HepG2 (cell line): ENCODE measurements at regions of chr4 and their contacts with region 1.

Region 1: DNA sequence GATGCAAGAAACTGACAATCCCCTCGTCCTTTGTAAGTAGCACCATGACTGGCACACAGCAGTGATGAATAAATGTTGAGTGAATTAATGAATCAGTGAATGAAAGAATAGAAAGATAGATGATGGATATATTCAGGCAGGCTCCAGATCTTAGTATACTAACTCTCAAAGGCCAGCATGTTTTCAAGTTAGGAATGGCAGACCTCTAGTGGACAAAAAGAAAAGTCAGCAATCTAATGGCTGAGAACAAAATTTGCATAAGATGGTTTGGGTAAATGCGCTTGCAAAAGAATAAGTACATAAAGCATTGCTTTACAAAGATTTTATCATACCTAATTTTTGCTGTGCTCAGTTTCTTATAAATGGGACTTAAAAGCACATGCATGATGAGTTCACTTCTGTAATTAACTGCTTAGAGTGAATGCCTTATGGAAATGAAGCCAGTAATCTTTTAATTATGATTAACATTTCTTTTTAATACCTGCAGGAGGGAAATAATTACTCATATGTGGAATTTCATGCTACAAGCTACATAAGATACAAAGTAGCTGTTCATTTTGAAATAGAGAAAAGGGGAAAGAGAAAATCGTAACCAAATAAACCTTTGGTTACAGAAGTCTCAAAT is 126.9 kb upstream of the GPRIN3 start:
- DNase-seq: no peak
- ATAC-seq: peak; percentile 63; the same call in 2 of the 3 replicates
- H3K4me3 ChIP-seq: no peak overlapping the region
- H3K27ac ChIP-seq: no peak overlapping the region
- H3K4me1 ChIP-seq: no peaks in the 10 kb centered on the region
- H3K27me3 ChIP-seq: no peaks in the 10 kb centered on the region
- CTCF ChIP-seq: peak; percentile 49
- EP300 ChIP-seq: no peak
- POLR2A ChIP-seq: no peak
- RAD21 ChIP-seq: no peak

Region 2: GRCh38 chr4:88866862-88867550 is 567.5 kb before region 1 on chr4:
- CTCF ChIA-PET with region 1: no interaction called
- POLR2A ChIA-PET with region 1: no interaction called
- in situ Hi-C with region 1: no loop called
- intact Hi-C with region 1: no loop called
- DNase-seq: no peak
- ATAC-seq: no peak
- H3K4me3 ChIP-seq: no peak overlapping the region
- H3K27ac ChIP-seq: no peak overlapping the region
- H3K4me1 ChIP-seq: peaks cover 11% of the 10 kb centered on the region
- H3K27me3 ChIP-seq: no peaks in the 10 kb centered on the region
- CTCF ChIP-seq: no peak
- EP300 ChIP-seq: no peak
- POLR2A ChIP-seq: no peak
- RAD21 ChIP-seq: no peak

Region 3: DNA sequence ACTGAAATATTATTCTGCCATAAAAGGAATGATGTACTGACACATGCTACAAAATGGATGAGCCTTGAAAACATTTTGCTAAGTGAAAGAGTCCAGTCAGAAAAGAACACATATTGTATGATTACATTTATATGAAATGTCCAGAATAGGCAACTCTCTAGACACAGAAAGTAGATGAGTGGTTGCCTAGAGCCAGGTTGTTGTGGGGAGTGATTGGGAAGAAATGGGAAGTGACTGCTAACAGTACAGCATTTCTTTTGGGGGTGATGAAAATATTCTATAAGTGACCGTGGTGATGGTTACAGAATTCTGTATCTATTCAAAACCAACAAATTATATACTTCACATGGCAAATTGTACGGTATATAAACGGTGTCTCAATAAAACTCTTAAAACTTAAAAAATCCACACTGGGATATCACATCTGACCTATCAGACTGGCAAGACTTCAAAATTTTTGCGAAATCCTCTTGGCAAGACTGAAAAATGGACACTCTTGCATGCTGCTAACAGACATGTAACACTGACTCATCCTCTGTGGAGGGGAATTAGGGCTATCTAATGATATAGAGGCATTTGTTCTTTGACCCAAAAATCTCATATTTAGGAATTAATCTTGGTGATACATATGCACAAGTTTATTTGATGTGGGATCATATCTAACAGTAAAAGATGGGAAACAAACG is 449.2 kb before region 1 on chr4:
- CTCF ChIA-PET with region 1: no interaction called
- POLR2A ChIA-PET with region 1: no interaction called
- in situ Hi-C with region 1: no loop called
- intact Hi-C with region 1: no loop called
- DNase-seq: no peak
- ATAC-seq: no peak
- H3K4me3 ChIP-seq: no peak overlapping the region
- H3K27ac ChIP-seq: no peak overlapping the region
- H3K4me1 ChIP-seq: no peaks in the 10 kb centered on the region
- H3K27me3 ChIP-seq: no peaks in the 10 kb centered on the region
- CTCF ChIP-seq: no peak
- EP300 ChIP-seq: no peak
- POLR2A ChIP-seq: no peak
- RAD21 ChIP-seq: no peak

Region 4: DNA sequence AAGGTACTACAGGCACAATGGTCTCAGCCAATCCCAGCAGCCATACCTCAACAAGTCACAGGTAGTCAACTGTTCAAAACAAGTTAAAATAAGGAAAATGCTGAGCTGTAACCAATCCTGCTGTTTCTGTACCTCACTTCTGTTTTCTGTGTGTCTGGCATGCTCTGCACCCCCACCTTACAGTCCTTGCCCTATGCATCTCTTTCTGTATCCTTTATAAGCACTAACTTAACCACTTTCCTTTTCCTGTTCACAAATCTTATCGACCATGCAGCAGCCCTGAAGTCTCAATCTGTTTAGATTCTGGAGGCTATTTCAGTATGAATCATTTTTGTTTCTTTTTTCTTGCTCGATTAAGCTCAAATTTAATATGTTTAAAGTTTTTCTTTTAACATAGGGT is 365.0 kb before region 1 on chr4:
- CTCF ChIA-PET with region 1: no interaction called
- POLR2A ChIA-PET with region 1: no interaction called
- in situ Hi-C with region 1: no loop called
- intact Hi-C with region 1: no loop called
- DNase-seq: no peak
- ATAC-seq: no peak
- H3K4me3 ChIP-seq: no peak overlapping the region
- H3K27ac ChIP-seq: no peak overlapping the region
- H3K4me1 ChIP-seq: no peaks in the 10 kb centered on the region
- H3K27me3 ChIP-seq: no peaks in the 10 kb centered on the region; a peak in 1 of 5 replicates
- CTCF ChIP-seq: no peak
- EP300 ChIP-seq: no peak
- POLR2A ChIP-seq: no peak
- RAD21 ChIP-seq: no peak

Region 5: GRCh38 chr4:89158884-89159503 is 275.5 kb before region 1 on chr4:
- CTCF ChIA-PET with region 1: interaction called, 4 read pairs
- POLR2A ChIA-PET with region 1: no interaction called
- in situ Hi-C with region 1: no loop called
- intact Hi-C with region 1: loop called (anchors 1 kb)
- DNase-seq: peak; percentile 6
- ATAC-seq: peak; percentile 22; the same call in 1 of the 3 replicates
- H3K4me3 ChIP-seq: no peak overlapping the region
- H3K27ac ChIP-seq: no peak overlapping the region
- H3K4me1 ChIP-seq: no peaks in the 10 kb centered on the region
- H3K27me3 ChIP-seq: no peaks in the 10 kb centered on the region
- CTCF ChIP-seq: peak; percentile 66
- EP300 ChIP-seq: no peak
- POLR2A ChIP-seq: no peak
- RAD21 ChIP-seq: no peak

Region 6: GRCh38 chr4:89226665-89227574 is 207.6 kb before region 1 on chr4:
- CTCF ChIA-PET with region 1: no interaction called
- POLR2A ChIA-PET with region 1: no interaction called
- in situ Hi-C with region 1: loop called (anchors 10 kb)
- intact Hi-C with region 1: loop called (anchors 1 kb)
- DNase-seq: peak; percentile 62
- ATAC-seq: peak; percentile 100
- H3K4me3 ChIP-seq: no peak overlapping the region
- H3K27ac ChIP-seq: no peak overlapping the region
- H3K4me1 ChIP-seq: peaks cover 15% of the 10 kb centered on the region; the same call in 1 of the 2 replicates
- H3K27me3 ChIP-seq: no peaks in the 10 kb centered on the region
- CTCF ChIP-seq: peak; percentile 86
- EP300 ChIP-seq: no peak
- POLR2A ChIP-seq: no peak
- RAD21 ChIP-seq: peak; percentile 65

Region 7: GRCh38 chr4:89254847-89255246 is 179.6 kb before region 1 on chr4:
- CTCF ChIA-PET with region 1: no interaction called
- POLR2A ChIA-PET with region 1: no interaction called
- in situ Hi-C with region 1: no loop called
- intact Hi-C with region 1: loop called (anchors 2 kb)
- DNase-seq: peak; percentile 12
- ATAC-seq: peak; percentile 74
- H3K4me3 ChIP-seq: no peak overlapping the region
- H3K27ac ChIP-seq: no peak overlapping the region
- H3K4me1 ChIP-seq: no peaks in the 10 kb centered on the region
- H3K27me3 ChIP-seq: no peaks in the 10 kb centered on the region
- CTCF ChIP-seq: peak; percentile 65
- EP300 ChIP-seq: no peak
- POLR2A ChIP-seq: no peak
- RAD21 ChIP-seq: no peak

Region 8: GRCh38 chr4:89708903-89709421 is 274.5 kb after region 1 on chr4:
- CTCF ChIA-PET with region 1: no interaction called
- POLR2A ChIA-PET with region 1: no interaction called
- in situ Hi-C with region 1: no loop called
- intact Hi-C with region 1: no loop called
- DNase-seq: no peak
- ATAC-seq: no peak
- H3K4me3 ChIP-seq: no peak overlapping the region
- H3K27ac ChIP-seq: no peak overlapping the region
- H3K4me1 ChIP-seq: peaks cover 11% of the 10 kb centered on the region; the same call in 1 of the 2 replicates
- H3K27me3 ChIP-seq: no peaks in the 10 kb centered on the region
- CTCF ChIP-seq: no peak
- EP300 ChIP-seq: no peak
- POLR2A ChIP-seq: no peak
- RAD21 ChIP-seq: no peak

Region 9: GRCh38 chr4:90293320-90293719 is 858.8 kb after region 1 on chr4:
- CTCF ChIA-PET with region 1: no interaction called
- POLR2A ChIA-PET with region 1: no interaction called
- in situ Hi-C with region 1: no loop called
- intact Hi-C with region 1: loop called (anchors 5 kb)
- DNase-seq: no peak
- ATAC-seq: no peak
- H3K4me3 ChIP-seq: no peak overlapping the region
- H3K27ac ChIP-seq: no peak overlapping the region
- H3K4me1 ChIP-seq: no peaks in the 10 kb centered on the region
- H3K27me3 ChIP-seq: no peaks in the 10 kb centered on the region
- CTCF ChIP-seq: no peak
- EP300 ChIP-seq: no peak
- POLR2A ChIP-seq: no peak
- RAD21 ChIP-seq: no peak